ENCODE measurements at regions of chr5 and their contacts with region 1.

Region 1: GRCh38 chr5:115180165-115180709 is 10.5 kb upstream of the TRIM36 start:
- DNase-seq: no peak
- ATAC-seq: peak; percentile 88
- H3K4me3 ChIP-seq: peak overlapping the region; percentile 46 to 69 (median 50)
- H3K27ac ChIP-seq: no peak overlapping the region
- H3K4me1 ChIP-seq: peaks cover 5% of the 10 kb centered on the region; the same call in 1 of the 2 replicates
- H3K27me3 ChIP-seq: peaks cover 3 to 54% of the 10 kb centered on the region in 2 experiments
- CTCF ChIP-seq: 0 out of 2 replicates have a peak, but pooled peaks have one; percentile 3
- EP300 ChIP-seq: no peak
- POLR2A ChIP-seq: no peak
- RAD21 ChIP-seq: no peak

Region 2: GRCh38 chr5:115246361-115246991 is 66.2 kb after region 1 on chr5:
- CTCF ChIA-PET with region 1: no interaction called
- POLR2A ChIA-PET with region 1: no interaction called
- in situ Hi-C with region 1: no loop called
- intact Hi-C with region 1: loop called (anchors 5 kb)
- DNase-seq: peak; percentile 49
- ATAC-seq: peak; percentile 76
- H3K4me3 ChIP-seq: no peak overlapping the region
- H3K27ac ChIP-seq: no peak overlapping the region
- H3K4me1 ChIP-seq: peaks cover 40% of the 10 kb centered on the region
- H3K27me3 ChIP-seq: no peaks in the 10 kb centered on the region
- CTCF ChIP-seq: peak; percentile 74
- EP300 ChIP-seq: no peak
- POLR2A ChIP-seq: no peak
- RAD21 ChIP-seq: peak; percentile 72

Measured in HepG2 (cell line).